Activated CD4-positive, alpha-beta memory T cell treated with anti-CD3 and anti-CD28 coated beads for 36 hours (primary cell): ENCODE measurements at regions of chr1 and their contacts with region 1.

Region 1: GRCh38 chr1:1115786-1116700 is at the start of gene C1orf159:
- DNase-seq: peak; percentile 99
- H3K4me3 Mint-ChIP-seq: peak within 1 kb of the TSS; percentile 79
- H3K27ac Mint-ChIP-seq: peak within 1 kb of the TSS; percentile 49
- H3K4me1 Mint-ChIP-seq: peaks cover 11% of the 10 kb centered on the region
- H3K27me3 Mint-ChIP-seq: peaks cover 7% of the 10 kb centered on the region
- total RNA-seq, gene C1orf159: 19.5 to 20.5 TPM

Region 2: DNA sequence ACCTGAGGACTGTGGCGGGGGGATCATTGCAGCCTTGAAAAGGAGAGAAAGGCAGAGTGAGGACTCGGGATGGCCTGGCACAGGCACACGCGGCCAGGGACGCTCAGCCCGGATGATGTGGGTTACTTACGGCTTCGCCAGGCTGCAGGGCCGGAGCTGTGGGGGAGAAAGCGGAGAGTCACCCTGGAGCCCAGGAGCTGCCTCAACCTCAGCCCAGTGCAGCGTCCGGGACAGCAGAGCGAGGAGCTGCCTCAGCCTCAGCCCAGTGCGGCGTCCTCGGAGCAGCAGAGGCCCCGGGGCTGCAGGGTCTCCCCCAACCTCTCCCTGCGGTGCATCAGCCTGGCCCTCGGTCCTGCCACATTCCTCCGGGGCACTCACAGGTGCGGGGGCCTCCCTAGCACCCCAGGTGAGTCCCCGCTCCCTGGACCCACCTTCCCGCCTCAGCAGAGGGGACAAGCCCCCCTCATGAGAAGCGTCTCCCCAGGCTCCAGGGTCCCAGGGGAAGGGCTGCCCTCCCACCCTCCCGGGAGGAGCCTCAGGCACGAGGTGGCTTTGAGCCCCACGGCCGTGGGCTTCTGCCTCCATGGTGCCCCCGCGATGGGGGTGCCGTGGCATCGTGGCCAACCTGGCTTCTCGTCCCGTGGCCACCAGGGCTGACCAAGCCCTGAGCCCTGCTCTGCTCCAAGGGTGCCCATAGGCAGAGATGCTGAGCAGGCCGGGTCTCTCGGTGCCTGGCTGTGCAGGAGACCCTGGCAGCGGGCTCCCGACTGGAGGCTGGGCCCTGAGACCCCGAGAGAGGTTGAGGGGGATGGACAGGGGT is 31.5 kb before region 1 on chr1:
- CTCF ChIA-PET with region 1: no interaction called
- POLR2A ChIA-PET with region 1: no interaction called
- intact Hi-C with region 1: no loop called
- DNase-seq: peak; percentile 7
- H3K4me3 Mint-ChIP-seq: no peak overlapping the region
- H3K27ac Mint-ChIP-seq: no peak overlapping the region
- H3K4me1 Mint-ChIP-seq: peaks cover 3% of the 10 kb centered on the region
- H3K27me3 Mint-ChIP-seq: no peaks in the 10 kb centered on the region

Region 3: DNA sequence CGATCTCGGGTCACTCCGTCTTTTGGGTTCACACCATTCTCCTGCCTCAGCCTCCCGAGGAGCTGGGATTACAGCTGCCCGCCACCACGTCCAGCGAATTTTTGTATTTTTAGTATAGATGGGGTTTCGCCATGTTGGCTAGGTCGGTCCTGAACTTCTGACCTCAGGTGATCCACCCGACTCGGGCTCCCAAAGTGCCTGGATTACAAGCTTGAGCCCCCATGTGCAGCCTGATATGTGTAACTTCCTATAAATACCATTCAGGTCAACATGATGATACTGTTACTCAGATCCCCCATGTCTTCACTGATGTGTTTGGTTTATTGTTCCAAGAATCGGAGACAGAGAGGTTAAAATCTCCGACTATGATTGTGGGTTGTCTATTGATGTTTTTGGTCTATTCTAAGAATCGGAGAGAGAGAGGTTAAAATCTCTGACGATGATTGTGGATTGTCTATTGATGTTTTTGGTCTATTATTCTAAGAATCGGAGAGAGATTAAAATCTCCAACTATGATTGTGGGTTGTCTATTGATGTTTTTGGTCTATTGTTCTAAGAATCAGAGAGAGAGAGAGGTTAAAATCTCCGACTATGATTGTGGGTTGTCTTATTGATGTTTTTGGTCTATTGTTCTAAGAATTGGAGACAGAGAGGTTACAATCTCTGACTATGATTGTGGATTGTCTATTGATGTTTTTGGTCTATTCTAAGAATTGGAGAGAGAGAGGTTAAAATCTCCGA is 17.2 kb before region 1 on chr1:
- CTCF ChIA-PET with region 1: no interaction called
- POLR2A ChIA-PET with region 1: no interaction called
- intact Hi-C with region 1: loop called (anchors 2 kb)
- DNase-seq: peak; percentile 48
- H3K4me3 Mint-ChIP-seq: peak overlapping the region; percentile 9
- H3K27ac Mint-ChIP-seq: peak overlapping the region; percentile 97
- H3K4me1 Mint-ChIP-seq: peaks cover 47% of the 10 kb centered on the region
- H3K27me3 Mint-ChIP-seq: peaks cover 3% of the 10 kb centered on the region

Region 4: GRCh38 chr1:1206376-1207260 is 90.6 kb after region 1 on chr1 and contains the start of gene TNFRSF18:
- CTCF ChIA-PET with region 1: interaction called, 13 read pairs
- POLR2A ChIA-PET with region 1: interaction called, 4 read pairs
- intact Hi-C with region 1: loop called (anchors 2 kb)
- DNase-seq: peak; percentile 76
- H3K4me3 Mint-ChIP-seq: peak within 1 kb of the TSS; percentile 84
- H3K27ac Mint-ChIP-seq: peak within 1 kb of the TSS; percentile 100
- H3K4me1 Mint-ChIP-seq: peaks cover 31% of the 10 kb centered on the region
- H3K27me3 Mint-ChIP-seq: no peaks in the 10 kb centered on the region
- total RNA-seq, gene TNFRSF18: 375 to 387 TPM

Region 5: GRCh38 chr1:1250786-1251284 is 134.8 kb after region 1 on chr1:
- CTCF ChIA-PET with region 1: interaction called, 43 read pairs
- POLR2A ChIA-PET with region 1: no interaction called
- intact Hi-C with region 1: loop called (anchors 5 kb)
- DNase-seq: peak; percentile 88
- H3K4me3 Mint-ChIP-seq: peak overlapping the region; percentile 36
- H3K27ac Mint-ChIP-seq: peak overlapping the region; percentile 90
- H3K4me1 Mint-ChIP-seq: peaks cover 16% of the 10 kb centered on the region
- H3K27me3 Mint-ChIP-seq: no peaks in the 10 kb centered on the region

Region 6: DNA sequence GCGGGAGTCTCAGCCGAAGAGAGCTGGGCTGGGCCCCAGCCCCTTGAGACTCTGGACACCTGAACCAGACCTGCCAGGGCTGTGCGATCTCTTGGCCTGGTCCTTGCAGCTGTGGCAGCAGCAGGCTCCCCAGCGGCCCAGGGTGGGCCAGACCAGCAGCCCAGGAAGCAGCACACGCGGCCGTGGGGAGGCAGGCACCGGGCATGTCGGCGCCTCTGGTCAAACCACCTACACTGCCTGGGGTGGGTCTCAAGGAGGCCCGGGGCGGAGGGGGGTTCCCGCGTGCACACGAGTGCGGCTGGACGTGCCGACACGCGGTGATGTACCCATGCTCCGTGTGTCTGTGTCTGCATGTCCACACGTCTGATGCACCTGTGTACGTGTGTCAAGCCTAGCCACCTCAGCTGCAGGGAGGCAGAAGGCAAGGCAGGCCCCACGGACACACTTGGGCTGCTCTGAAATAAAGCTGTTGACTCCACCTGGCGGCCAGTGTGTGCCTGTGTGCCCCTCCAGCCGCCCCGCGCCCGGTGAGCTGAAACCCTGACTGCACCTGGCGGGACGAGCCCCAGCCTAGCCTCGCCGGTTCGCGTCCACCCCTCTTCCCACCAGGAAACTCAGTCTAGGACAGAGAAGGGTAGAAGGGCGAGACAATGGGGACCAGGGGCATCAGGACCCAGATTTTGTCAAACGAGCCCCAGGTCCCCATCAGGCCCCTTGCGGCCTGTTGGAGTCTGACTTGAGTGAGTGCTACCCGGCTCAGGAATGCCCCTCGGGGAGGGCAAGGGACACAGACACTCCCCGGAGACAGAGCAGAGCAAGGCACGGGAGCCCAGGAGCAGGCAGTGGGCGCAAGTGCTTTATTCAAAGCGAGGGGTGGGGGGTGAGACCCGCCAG is 175.8 kb after region 1 on chr1:
- CTCF ChIA-PET with region 1: interaction called, 74 read pairs
- POLR2A ChIA-PET with region 1: no interaction called
- intact Hi-C with region 1: no loop called
- DNase-seq: peak; percentile 75
- H3K4me3 Mint-ChIP-seq: no peak overlapping the region
- H3K27ac Mint-ChIP-seq: no peak overlapping the region
- H3K4me1 Mint-ChIP-seq: peaks cover 4% of the 10 kb centered on the region
- H3K27me3 Mint-ChIP-seq: no peaks in the 10 kb centered on the region

Region 7: GRCh38 chr1:1374929-1375662 is 259.1 kb after region 1 on chr1 and contains the start of gene AURKAIP1:
- CTCF ChIA-PET with region 1: no interaction called
- POLR2A ChIA-PET with region 1: no interaction called
- intact Hi-C with region 1: loop called (anchors 1 kb)
- DNase-seq: peak; percentile 98
- H3K4me3 Mint-ChIP-seq: peak within 1 kb of the TSS; percentile 87
- H3K27ac Mint-ChIP-seq: peak within 1 kb of the TSS; percentile 90
- H3K4me1 Mint-ChIP-seq: peaks cover 18% of the 10 kb centered on the region
- H3K27me3 Mint-ChIP-seq: no peaks in the 10 kb centered on the region
- total RNA-seq, gene AURKAIP1: 124 to 131 TPM